Left cardiac atrium (tissue), 4 donors: ENCODE measurements at regions of chr11 and their contacts with region 1.

Region 1: DNA sequence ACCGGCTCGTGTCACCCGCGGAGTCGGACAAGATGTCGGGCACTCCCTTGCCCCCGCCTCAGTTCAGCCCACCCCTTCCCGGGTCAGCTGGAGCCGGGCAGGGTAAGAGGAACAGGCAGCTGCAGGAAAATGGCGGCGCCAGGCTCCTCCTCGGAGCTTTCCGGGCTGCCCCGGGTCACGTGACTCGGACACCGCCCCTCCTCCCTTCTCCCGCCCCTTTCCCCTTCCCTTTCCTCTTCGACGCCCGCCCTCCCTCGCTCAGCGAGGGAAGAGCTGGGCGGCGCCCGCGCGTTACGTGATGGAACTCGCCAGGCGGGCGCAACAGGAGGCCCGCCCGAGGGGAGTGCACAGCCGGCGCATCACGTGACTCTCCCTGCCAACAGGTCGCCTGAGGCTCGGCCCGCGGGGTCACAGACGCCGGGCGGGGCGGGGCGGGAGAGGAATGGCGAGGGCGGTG is at the start of gene PICALM:
- DNase-seq: peak; percentile 99
- ATAC-seq: peak; percentile 96 to 97
- total RNA-seq, gene PICALM: 148 to 260 TPM

Region 2: DNA sequence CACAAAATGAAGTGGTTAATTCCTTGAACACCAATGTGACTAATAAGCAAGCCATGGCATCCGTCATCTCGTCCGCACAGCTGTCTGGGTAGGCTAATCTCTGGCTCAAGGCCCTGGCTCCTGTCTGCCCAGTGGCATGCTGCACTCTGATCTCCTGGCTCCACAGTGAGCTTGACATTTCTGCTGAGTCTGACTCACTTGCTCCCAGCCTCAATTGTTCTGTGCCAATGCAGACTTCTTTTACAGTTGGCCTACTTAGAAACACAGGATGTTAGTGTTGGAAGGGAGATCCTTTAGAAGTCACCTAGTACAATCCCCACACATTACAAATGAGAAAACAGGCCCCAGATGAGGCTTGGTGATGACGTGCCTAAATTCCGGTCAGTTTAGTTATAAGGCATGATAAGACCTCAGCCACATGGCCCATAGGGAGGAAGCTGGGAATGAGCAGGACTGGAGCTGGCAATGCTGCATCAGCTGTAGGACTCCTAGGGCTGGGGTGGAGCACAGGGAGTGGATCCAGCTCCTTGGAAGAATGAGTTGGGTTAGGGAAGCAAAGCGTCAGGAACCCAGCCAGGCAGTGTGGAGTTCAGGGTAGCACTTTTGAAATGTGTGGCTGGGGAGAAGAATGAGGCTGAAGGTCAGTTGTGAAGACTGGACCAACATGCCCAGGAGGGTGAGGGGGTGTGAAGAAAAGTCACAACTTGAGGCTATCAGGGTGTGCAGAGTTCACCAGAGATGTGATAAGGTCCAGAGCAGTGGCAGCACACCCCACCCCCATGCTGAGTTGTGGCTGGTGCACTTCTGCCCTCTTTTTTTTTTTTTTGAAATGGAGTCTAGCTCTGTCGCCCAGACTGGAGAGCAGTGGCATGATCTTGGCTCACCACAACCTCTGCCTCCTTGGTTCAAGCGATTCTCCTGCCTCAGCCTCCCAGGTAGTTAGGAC is 105.4 kb after region 1 on chr11:
- intact Hi-C with region 1: loop called in 1 of 2 experiments (anchors 2 kb)
- DNase-seq: peak; percentile 92
- ATAC-seq: peak; percentile 91 to 95